Endothelial cell of umbilical vein (primary cell): ENCODE measurements at regions of chr17 and their contacts with region 1.

Region 1: GRCh38 chr17:78019367-78019975 is 61.0 kb downstream of the TNRC6C start:
- DNase-seq: peak; percentile 56
- H3K4me3 ChIP-seq: no peak overlapping the region
- H3K27ac ChIP-seq: no peak overlapping the region
- H3K4me1 ChIP-seq: no peaks in the 10 kb centered on the region
- H3K27me3 ChIP-seq: no peaks in the 10 kb centered on the region
- CTCF ChIP-seq: peak; percentile 19 to 28
- POLR2A ChIP-seq: no peak

Region 2: DNA sequence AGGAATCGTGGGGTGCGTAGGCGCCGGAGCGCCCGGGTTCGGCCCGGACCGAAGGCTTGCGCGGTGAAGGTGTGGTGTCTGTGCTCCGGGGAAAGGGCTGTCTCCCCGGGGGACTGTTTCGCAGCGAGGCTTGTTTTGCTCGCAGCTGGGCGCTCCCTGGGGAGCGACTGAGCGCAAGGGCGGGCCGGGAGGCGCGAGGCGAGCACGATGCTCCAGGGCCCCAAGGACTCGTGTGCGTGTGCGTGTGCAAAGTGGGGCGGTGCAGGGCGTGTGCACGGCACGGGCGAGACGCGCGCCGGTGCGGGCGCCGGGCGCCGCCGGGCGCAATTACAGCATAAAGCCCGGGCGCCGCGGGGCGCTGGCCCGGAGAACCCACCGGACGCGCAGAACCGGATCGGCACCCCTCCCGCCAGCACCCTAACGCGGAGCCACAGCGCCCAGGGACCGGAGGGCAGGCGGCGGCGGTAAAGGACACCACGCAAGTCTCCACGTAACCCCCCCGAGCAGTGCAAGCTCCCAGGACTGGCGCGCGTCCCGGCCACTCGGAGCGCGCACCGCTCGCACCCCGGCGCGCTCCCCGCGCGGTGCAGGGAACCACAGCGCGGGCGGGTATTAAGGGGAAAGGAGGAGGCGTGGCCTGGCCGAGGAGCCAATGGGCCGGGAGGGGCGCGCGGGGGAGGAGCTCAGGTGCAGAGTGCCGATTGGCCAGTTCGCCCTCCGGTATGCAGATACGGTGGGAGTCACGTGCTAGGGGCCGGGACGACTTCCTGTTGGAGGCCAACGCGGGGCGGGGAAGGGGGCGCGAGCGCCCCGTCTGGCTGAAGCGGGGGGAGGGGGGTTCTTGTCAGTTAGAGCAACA is 61.4 kb before region 1 on chr17 and contains the start of gene TNRC6C:
- CTCF ChIA-PET with region 1: interaction called, 37 read pairs
- POLR2A ChIA-PET with region 1: interaction called, 25 read pairs
- dilution Hi-C with region 1: no loop called
- intact Hi-C with region 1: loop called (anchors 1 kb)
- DNase-seq: peak; percentile 98
- H3K4me3 ChIP-seq: peak within 1 kb of the TSS; percentile 65 to 81 (median 67)
- H3K27ac ChIP-seq: peak within 1 kb of the TSS; percentile 21
- H3K4me1 ChIP-seq: peaks cover 20% of the 10 kb centered on the region
- H3K27me3 ChIP-seq: peaks cover 26 to 29% of the 10 kb centered on the region in 2 experiments
- CTCF ChIP-seq: peak in 1 of 2 donors; percentile 33
- POLR2A ChIP-seq: peak; percentile 99
- total RNA-seq, gene TNRC6C: 17.5 and 20.4 TPM in 2 replicates

Region 3: GRCh38 chr17:78005452-78006171 is 13.9 kb before region 1 on chr17:
- CTCF ChIA-PET with region 1: interaction called, 41 read pairs
- POLR2A ChIA-PET with region 1: no interaction called
- dilution Hi-C with region 1: no loop called
- intact Hi-C with region 1: no loop called
- DNase-seq: no peak
- H3K4me3 ChIP-seq: no peak overlapping the region
- H3K27ac ChIP-seq: no peak overlapping the region
- H3K4me1 ChIP-seq: peaks cover 30% of the 10 kb centered on the region
- H3K27me3 ChIP-seq: no peaks in the 10 kb centered on the region
- CTCF ChIP-seq: no peak
- POLR2A ChIP-seq: no peak

Region 4: DNA sequence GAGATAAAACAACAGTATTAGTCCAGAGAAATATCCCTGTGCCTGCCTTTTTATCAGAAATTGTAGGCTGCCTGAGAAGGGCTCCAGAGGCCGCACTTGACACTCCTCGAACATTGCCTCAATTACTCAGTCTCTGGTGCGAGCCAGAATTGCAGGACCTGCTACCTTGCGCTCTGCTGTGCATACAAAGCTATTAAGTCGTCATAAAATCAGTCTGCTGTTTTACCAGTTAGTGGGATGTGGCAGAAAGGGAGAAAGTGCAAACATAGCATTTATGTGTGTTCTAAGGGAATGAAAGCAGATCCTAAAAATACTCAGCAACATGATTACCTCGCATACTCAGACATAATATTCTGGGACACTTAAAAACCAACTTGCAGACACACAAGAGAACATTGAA is 38.5 kb after region 1 on chr17:
- CTCF ChIA-PET with region 1: interaction called, 32 read pairs
- POLR2A ChIA-PET with region 1: no interaction called
- dilution Hi-C with region 1: no loop called
- intact Hi-C with region 1: no loop called
- DNase-seq: no peak
- H3K4me3 ChIP-seq: no peak overlapping the region
- H3K27ac ChIP-seq: no peak overlapping the region
- H3K4me1 ChIP-seq: peaks cover 17% of the 10 kb centered on the region
- H3K27me3 ChIP-seq: no peaks in the 10 kb centered on the region
- CTCF ChIP-seq: no peak
- POLR2A ChIP-seq: no peak

Region 5: DNA sequence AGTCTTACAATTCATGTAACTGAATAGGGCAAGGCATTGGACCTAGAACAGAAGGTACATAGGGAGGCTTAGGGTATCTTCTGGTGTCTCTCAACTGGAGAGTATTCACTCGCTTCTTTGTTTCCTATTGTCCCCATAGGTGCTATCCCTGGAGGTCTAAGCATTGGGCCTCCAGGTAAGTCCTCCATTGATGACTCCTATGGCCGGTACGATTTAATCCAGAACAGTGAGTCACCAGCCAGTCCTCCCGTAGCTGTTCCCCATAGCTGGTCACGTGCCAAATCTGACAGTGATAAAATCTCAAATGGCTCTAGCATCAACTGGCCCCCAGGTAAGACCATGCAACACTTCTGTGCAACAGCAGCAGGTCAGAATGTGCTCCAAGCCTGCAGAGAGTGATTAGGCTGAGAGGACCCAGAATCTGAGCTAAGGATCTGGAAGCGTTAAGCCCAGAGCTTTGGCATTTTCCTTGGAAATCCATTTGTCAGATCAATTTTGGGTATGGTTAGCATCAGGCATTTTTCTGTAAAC is 73.4 kb after region 1 on chr17:
- CTCF ChIA-PET with region 1: interaction called, 11 read pairs
- POLR2A ChIA-PET with region 1: no interaction called
- dilution Hi-C with region 1: no loop called
- intact Hi-C with region 1: no loop called
- DNase-seq: no peak
- H3K4me3 ChIP-seq: no peak overlapping the region
- H3K27ac ChIP-seq: no peak overlapping the region
- H3K4me1 ChIP-seq: no peaks in the 10 kb centered on the region
- H3K27me3 ChIP-seq: no peaks in the 10 kb centered on the region
- CTCF ChIP-seq: no peak
- POLR2A ChIP-seq: no peak

Region 6: GRCh38 chr17:78176548-78177025 is 157.1 kb after region 1 on chr17:
- CTCF ChIA-PET with region 1: interaction called, 15 read pairs
- POLR2A ChIA-PET with region 1: no interaction called
- dilution Hi-C with region 1: no loop called
- intact Hi-C with region 1: loop called (anchors 5 kb)
- DNase-seq: peak; percentile 52
- H3K4me3 ChIP-seq: no peak overlapping the region
- H3K27ac ChIP-seq: no peak overlapping the region
- H3K4me1 ChIP-seq: peaks cover 8% of the 10 kb centered on the region
- H3K27me3 ChIP-seq: no peaks in the 10 kb centered on the region
- CTCF ChIP-seq: peak; percentile 96 to 98
- POLR2A ChIP-seq: no peak